ENCODE measurements at regions of chr5 and their contacts with region 1.

Region 1: GRCh38 chr5:135871268-135871915 is 24.2 kb downstream of the IL9 start:
- DNase-seq: no peak
- H3K4me3 Mint-ChIP-seq: no peak overlapping the region
- H3K27ac Mint-ChIP-seq: no peak overlapping the region
- H3K4me1 Mint-ChIP-seq: no peaks in the 10 kb centered on the region
- H3K27me3 Mint-ChIP-seq: peaks cover 26% of the 10 kb centered on the region
- CTCF ChIP-seq: no peak

Region 2: DNA sequence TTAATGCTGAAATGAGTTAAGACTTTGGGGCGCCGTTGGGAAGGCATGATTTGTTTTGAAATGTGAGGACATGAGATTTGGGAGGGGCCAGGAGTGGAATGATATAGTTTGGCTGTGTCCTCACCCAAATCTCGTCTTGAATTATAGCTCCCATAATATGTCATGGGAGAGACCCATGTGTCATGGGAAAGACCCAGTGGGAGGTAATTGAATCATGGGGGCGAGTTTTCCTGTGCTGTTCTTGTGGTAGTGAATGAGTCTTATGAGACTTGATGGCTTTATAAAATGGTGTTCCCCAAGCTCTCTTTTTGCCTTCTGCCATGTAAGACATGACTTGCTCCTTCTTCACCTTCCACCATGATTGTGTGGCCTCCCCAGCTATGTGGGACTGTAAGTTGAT is 31.8 kb before region 1 on chr5:
- CTCF ChIA-PET with region 1: no interaction called
- POLR2A ChIA-PET with region 1: no interaction called
- intact Hi-C with region 1: no loop called
- DNase-seq: no peak
- H3K4me3 Mint-ChIP-seq: no peak overlapping the region
- H3K27ac Mint-ChIP-seq: no peak overlapping the region
- H3K4me1 Mint-ChIP-seq: no peaks in the 10 kb centered on the region
- H3K27me3 Mint-ChIP-seq: peaks cover 64% of the 10 kb centered on the region
- CTCF ChIP-seq: no peak

Region 3: DNA sequence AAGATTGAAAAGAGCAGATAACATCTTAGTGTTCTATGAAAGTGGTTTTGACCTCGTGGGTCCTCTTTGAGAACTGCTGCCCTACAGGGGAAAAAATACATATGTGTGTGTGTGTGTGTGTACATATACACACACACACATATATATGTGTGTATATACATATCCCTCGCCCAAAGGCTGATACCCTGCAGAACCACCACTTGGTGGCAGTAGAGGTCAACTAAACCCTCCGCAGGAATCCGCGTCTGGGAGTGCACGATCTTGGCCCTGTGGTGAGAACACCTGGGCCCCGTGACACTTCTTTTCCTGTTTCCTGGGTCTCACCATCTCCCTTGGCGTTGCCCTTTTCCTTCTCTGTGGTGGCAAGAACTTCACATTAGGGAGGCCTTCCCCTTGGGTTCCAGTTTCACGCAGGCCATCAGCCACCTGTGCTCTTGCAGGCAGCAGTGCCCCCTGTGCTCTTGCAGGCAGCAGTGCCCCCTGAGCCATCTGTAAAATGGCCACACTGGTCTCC is 16.0 kb after region 1 on chr5:
- CTCF ChIA-PET with region 1: interaction called, 13 read pairs
- POLR2A ChIA-PET with region 1: no interaction called
- intact Hi-C with region 1: no loop called
- DNase-seq: peak; percentile 90
- H3K4me3 Mint-ChIP-seq: no peak overlapping the region
- H3K27ac Mint-ChIP-seq: no peak overlapping the region
- H3K4me1 Mint-ChIP-seq: no peaks in the 10 kb centered on the region
- H3K27me3 Mint-ChIP-seq: peaks cover 37% of the 10 kb centered on the region
- CTCF ChIP-seq: peak; percentile 96

Region 4: GRCh38 chr5:135921388-135921787 is 50.0 kb after region 1 on chr5:
- CTCF ChIA-PET with region 1: no interaction called
- POLR2A ChIA-PET with region 1: no interaction called
- intact Hi-C with region 1: no loop called
- DNase-seq: peak; percentile 72
- H3K4me3 Mint-ChIP-seq: no peak overlapping the region
- H3K27ac Mint-ChIP-seq: no peak overlapping the region
- H3K4me1 Mint-ChIP-seq: no peaks in the 10 kb centered on the region
- H3K27me3 Mint-ChIP-seq: peaks cover 84% of the 10 kb centered on the region
- CTCF ChIP-seq: no peak

Region 5: DNA sequence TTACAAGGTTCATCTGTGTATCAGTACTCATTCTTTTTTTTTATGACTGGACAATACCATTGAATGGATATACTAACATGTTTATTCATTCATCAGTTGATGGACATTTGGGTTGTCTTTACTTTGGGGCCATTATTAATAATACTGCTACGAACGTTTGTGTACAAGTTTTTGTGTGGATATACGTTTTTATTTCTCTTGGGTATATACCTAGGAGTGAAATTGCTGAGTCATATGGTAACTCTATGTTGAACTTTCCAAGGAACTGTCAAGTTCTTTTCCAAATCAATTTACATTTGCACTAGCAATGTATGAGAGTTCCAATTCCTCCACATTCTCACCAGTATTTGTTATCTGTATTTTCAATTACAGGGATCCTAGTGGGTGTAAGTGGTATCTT is 95.4 kb after region 1 on chr5:
- CTCF ChIA-PET with region 1: no interaction called
- POLR2A ChIA-PET with region 1: no interaction called
- intact Hi-C with region 1: no loop called
- DNase-seq: no peak
- H3K4me3 Mint-ChIP-seq: no peak overlapping the region
- H3K27ac Mint-ChIP-seq: no peak overlapping the region
- H3K4me1 Mint-ChIP-seq: peaks cover 7% of the 10 kb centered on the region
- H3K27me3 Mint-ChIP-seq: no peaks in the 10 kb centered on the region
- CTCF ChIP-seq: no peak

Measured in MCF 10A (cell line).